Left ventricle myocardium superior (tissue), 1 donor: ENCODE measurements at regions of chr7 and their contacts with region 1.

Region 1: DNA sequence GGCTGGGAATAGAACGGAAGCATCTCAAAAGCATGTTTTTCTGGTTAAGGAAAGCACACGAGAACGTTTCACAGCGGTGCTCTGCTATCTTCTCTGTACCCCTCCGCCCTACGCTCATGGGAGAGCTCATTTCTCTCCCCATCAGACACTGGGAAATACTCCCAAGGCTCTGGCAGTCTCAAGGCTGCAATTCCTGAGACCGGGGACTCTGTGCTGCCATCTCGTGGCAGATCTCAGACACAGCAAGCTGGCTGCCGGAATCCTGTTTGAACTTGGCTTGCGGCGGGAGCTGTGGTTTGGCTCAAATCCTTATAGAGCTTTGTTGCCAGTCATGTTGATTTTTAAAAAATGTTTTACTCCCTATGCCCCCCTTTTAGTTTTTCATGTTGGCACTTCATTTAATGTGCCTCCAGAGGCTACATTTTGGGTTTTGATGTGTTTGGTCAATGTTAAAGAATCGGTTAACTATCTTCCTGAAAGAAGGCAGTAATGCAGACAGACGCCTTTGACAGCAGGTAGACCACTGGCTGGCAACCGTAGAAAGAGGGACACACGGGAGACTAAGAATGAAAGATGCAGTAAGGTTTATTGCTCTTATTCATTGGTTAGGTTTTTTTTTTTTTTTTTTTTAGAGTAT is 27.6 kb downstream of the BMPER start:
- DNase-seq: peak; percentile 84
- ATAC-seq: peak; percentile 93

Region 2: GRCh38 chr7:33243319-33243881 is 689.5 kb before region 1 on chr7:
- intact Hi-C with region 1: loop called (anchors 5 kb)
- DNase-seq: no peak
- ATAC-seq: peak; percentile 41

Region 3: GRCh38 chr7:33882040-33882837 is 50.7 kb before region 1 on chr7:
- intact Hi-C with region 1: no loop called
- DNase-seq: peak; percentile 33
- ATAC-seq: peak; percentile 95